PC-9 (cell line): ENCODE measurements at regions of chr2 and their contacts with region 1.

Region 1: DNA sequence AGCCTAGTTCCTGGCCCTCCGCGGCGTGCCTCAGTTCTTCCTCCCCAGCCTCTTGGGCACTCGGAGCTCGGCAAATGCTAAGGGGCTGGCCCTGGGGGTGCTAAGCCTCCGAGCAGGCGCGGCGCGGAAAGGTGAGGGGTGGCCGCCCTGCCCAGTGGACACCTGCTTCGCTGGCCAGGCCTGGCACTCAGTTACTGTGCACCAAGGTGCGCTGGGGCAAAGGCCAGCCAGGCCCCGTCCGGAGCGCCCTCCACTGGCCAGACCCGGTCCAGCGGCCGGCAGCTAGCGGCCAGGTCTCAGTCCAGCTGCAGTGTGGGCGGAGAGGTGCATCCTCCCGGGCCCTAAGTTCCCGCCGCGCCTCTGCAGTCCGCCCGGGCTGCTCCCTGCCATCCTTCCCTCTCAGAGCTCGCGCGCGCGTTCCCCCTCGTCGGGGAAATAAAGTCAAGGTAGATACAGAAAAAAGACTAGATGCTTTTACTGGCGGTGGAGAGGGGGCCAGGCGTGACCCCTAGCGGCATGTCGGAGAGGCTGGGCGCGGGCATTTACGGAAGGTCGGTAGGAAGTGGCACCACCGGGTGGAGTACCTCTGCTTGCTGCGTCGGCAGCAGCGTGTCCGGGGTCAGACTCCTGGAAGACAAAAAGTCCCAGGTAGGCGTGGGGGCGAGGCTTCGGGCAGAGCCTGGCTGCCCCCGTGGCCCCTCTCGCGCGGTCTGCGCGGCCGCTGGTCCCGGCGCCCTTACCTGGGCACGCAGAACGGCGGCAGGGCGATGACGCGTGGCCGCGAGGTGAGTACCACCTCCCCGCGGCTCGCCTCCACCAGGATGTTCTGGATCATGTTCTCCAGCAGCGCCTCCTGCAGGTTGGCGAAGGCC is 9.4 kb upstream of the CRYBA2 start:
- DNase-seq: peak in 1 of 2 experiments; percentile 75
- H3K4me3 ChIP-seq: peak overlapping the region; percentile 55
- H3K27ac ChIP-seq: no peak overlapping the region
- H3K4me1 ChIP-seq: 0 out of 2 replicates have a peak, but pooled peaks cover 5% of the 10 kb centered on the region
- H3K27me3 ChIP-seq: peaks cover 19% of the 10 kb centered on the region
- CTCF ChIP-seq: peak; percentile 71

Region 2: GRCh38 chr2:218876562-218877219 is 125.9 kb before region 1 on chr2:
- CTCF ChIA-PET with region 1: no interaction called
- POLR2A ChIA-PET with region 1: interaction called, 6 read pairs
- intact Hi-C with region 1: loop called (anchors 5 kb)
- DNase-seq: peak in 1 of 2 experiments; percentile 77
- H3K4me3 ChIP-seq: no peak overlapping the region
- H3K27ac ChIP-seq: no peak overlapping the region
- H3K4me1 ChIP-seq: 0 out of 2 replicates have a peak, but pooled peaks cover 4% of the 10 kb centered on the region
- H3K27me3 ChIP-seq: no peaks in the 10 kb centered on the region
- CTCF ChIP-seq: peak; percentile 99

Region 3: DNA sequence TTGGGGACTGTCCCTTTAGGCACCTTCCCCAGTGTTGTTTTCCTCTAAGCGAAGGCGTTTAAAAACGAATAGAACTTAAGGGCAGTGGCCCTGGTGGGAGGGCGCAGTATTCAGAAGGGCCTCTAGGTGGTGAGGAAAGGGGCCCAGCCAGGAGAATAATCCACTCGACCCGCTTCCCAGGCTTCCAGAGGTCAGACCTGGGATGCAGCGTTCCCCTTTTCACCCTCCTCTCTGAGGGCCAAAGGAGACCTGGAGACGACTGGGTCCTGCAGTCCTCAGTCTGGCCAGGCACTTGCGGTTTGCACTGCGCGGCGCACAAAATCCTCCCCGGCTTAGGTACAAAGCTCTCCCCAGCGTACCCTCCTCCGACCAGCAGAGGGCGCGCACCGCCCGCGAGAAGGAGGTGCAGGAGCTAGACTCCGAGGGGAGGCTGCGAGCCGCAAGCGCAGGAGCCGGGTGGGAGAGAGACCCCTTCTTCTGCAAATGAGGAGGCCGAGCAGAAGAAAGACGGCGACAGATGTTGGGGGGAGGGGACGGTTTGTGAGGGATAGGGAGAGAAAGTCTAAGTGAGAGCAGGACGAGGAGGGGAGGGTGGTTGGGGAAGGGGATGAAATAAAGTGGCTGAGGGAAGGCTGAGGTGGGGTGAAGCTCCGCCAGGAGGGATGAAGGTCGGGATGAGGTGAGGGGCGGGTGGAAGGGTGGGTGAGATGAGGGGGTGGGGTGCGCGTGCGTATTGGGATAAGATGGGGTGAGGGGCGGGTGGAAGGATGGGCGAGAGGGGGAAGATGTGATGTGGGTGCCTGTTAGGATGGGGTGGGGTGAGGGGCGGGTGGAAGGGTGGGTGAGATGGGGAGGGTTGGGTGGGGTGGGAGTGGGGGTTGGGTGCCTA is 22.5 kb before region 1 on chr2:
- CTCF ChIA-PET with region 1: interaction called, 10 read pairs
- POLR2A ChIA-PET with region 1: no interaction called
- intact Hi-C with region 1: no loop called
- DNase-seq: peak; percentile 53 to 79
- H3K4me3 ChIP-seq: peak overlapping the region; percentile 51; the same call in 1 of the 2 replicates
- H3K27ac ChIP-seq: no peak overlapping the region
- H3K4me1 ChIP-seq: no peaks in the 10 kb centered on the region
- H3K27me3 ChIP-seq: peaks cover 37% of the 10 kb centered on the region
- CTCF ChIP-seq: peak; percentile 97

Region 4: GRCh38 chr2:218988650-218989049 is 14.0 kb before region 1 on chr2:
- CTCF ChIA-PET with region 1: interaction called, 10 read pairs
- POLR2A ChIA-PET with region 1: no interaction called
- intact Hi-C with region 1: no loop called
- DNase-seq: no peak
- H3K4me3 ChIP-seq: no peak overlapping the region
- H3K27ac ChIP-seq: no peak overlapping the region
- H3K4me1 ChIP-seq: peaks cover 2% of the 10 kb centered on the region; the same call in 1 of the 2 replicates
- H3K27me3 ChIP-seq: peaks cover 67% of the 10 kb centered on the region
- CTCF ChIP-seq: no peak

Region 5: GRCh38 chr2:219327719-219328118 is 325.1 kb after region 1 on chr2:
- CTCF ChIA-PET with region 1: no interaction called
- POLR2A ChIA-PET with region 1: no interaction called
- intact Hi-C with region 1: no loop called
- DNase-seq: no peak
- H3K4me3 ChIP-seq: no peak overlapping the region
- H3K27ac ChIP-seq: no peak overlapping the region
- H3K4me1 ChIP-seq: no peaks in the 10 kb centered on the region
- H3K27me3 ChIP-seq: peaks cover 92% of the 10 kb centered on the region
- CTCF ChIP-seq: no peak